Breast epithelium (tissue), 4 donors: ENCODE measurements at regions of chr10 and their contacts with region 1.

Region 1: GRCh38 chr10:22314852-22315251 is 1.3 kb upstream of the COMMD3 start:
- DNase-seq: no peak
- H3K4me3 ChIP-seq: no peak overlapping the region
- H3K27ac ChIP-seq: no peak overlapping the region
- H3K4me1 ChIP-seq: no peaks in the 10 kb centered on the region
- H3K27me3 ChIP-seq: no peaks in the 10 kb centered on the region
- CTCF ChIP-seq: no peak
- POLR2A ChIP-seq: no peak

Region 2: GRCh38 chr10:22103701-22104470 is 211.0 kb before region 1 on chr10:
- intact Hi-C with region 1: no loop called
- DNase-seq: no peak
- H3K4me3 ChIP-seq: no peak overlapping the region
- H3K27ac ChIP-seq: no peak overlapping the region
- H3K4me1 ChIP-seq: no peaks in the 10 kb centered on the region
- H3K27me3 ChIP-seq: no peaks in the 10 kb centered on the region
- CTCF ChIP-seq: peak in 1 of 3 donors; percentile 23
- POLR2A ChIP-seq: no peak

Region 3: DNA sequence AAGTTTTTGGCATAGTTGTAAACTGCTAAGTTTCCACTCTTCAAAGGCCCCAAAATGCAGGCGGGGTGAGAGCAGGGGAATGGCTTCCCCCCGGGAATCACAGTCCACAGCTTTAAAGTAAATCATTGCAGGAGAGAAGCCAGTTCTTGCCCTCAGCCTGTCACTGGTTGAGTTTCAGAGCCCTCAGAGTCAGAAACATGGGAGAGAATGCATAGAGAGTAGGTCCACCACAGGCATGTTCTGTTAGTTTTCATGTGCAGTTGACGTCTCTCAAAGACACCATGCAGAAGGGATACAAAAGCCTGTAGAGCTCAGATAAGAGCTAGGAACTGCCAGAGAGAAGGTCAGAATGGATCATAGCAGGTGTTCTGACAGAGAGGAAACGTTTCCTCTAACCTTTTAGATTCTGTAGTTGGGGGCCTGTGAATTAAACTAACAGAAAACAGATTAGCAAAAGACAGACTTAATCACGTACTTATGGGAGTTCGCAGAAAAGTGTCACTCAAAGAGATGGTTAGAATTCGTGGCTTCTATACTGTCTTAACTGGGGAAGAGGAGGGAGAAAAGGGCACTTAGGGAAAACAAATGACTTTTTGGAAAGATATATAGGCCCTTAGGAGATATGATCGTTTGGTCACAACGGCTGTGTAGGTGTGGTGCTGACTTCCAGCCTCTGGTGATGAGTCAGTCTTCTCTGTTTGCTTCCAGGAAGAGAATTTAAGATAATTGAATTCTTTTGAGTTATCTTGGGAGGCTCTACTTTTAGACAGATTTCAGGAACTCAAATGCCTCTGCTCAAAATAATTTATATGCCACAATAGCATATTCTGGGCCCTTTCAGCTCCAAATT is 732.6 kb after region 1 on chr10:
- intact Hi-C with region 1: loop called (anchors 5 kb)
- DNase-seq: no peak
- H3K4me3 ChIP-seq: no peak overlapping the region
- H3K27ac ChIP-seq: no peak overlapping the region
- H3K4me1 ChIP-seq: no peaks in the 10 kb centered on the region
- H3K27me3 ChIP-seq: no peaks in the 10 kb centered on the region
- CTCF ChIP-seq: no peak
- POLR2A ChIP-seq: no peak